Activated CD4-positive, alpha-beta memory T cell treated with anti-CD3 and anti-CD28 coated beads for 36 hours (primary cell): ENCODE measurements at regions of chr11 and their contacts with region 1.

Region 1: DNA sequence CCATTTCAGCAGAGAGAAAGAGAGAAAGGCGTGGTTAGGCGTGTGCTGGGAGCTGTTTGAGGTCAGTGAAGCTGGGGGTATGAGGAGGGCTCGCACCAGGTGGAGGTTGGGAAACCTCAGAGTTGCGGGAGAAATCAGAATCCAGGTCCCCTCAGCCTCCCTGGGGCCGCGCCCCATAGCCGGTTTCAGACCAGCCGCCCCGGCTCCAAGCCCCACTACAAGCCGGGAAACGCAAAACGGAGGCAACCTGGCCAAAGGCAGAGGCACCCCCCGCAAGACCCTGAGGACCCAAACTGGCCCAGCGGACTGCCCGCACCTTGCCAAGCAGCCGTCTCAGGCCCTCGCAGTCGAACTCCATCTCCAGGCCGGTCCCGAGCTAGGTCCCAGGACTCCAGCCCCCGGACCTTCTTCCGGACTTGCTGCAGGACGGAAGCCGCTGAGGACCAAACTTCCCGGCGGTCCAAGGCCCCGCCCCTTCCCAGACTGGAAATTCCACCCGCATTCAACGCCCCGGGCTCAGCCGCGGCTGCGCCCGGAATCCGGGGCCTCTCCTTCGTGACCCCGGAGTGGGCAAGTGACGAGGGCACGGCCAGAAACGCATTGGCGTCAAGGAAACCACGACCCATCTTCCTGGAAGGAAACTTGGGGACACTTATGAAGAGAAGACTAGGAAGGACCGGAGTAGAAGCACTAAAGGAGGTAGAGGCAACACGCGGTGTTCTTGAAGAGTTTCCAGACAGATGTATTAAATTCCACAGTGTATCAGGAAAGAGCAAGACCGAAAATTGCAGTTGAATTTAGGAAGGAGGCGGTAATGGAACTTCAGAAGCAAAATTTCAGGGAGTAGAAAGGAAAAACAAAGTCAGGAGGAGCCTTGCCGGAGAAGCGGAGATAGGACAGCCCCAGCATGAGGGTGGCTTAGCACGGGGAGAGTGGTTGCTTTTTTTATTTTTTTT is at the start of gene UEVLD:
- DNase-seq: peak; percentile 81
- H3K4me3 Mint-ChIP-seq: no peak within 1 kb of the TSS
- H3K27ac Mint-ChIP-seq: no peak within 1 kb of the TSS
- H3K4me1 Mint-ChIP-seq: peaks cover 10% of the 10 kb centered on the region
- H3K27me3 Mint-ChIP-seq: no peaks in the 10 kb centered on the region
- total RNA-seq, gene UEVLD: 20.9 to 26.2 TPM

Region 2: GRCh38 chr11:18540207-18541009 is 48.2 kb before region 1 on chr11:
- CTCF ChIA-PET with region 1: interaction called, 3 read pairs
- POLR2A ChIA-PET with region 1: no interaction called
- intact Hi-C with region 1: loop called (anchors 5 kb)
- DNase-seq: no peak
- H3K4me3 Mint-ChIP-seq: no peak overlapping the region
- H3K27ac Mint-ChIP-seq: no peak overlapping the region
- H3K4me1 Mint-ChIP-seq: peaks cover 5% of the 10 kb centered on the region
- H3K27me3 Mint-ChIP-seq: no peaks in the 10 kb centered on the region

Region 3: DNA sequence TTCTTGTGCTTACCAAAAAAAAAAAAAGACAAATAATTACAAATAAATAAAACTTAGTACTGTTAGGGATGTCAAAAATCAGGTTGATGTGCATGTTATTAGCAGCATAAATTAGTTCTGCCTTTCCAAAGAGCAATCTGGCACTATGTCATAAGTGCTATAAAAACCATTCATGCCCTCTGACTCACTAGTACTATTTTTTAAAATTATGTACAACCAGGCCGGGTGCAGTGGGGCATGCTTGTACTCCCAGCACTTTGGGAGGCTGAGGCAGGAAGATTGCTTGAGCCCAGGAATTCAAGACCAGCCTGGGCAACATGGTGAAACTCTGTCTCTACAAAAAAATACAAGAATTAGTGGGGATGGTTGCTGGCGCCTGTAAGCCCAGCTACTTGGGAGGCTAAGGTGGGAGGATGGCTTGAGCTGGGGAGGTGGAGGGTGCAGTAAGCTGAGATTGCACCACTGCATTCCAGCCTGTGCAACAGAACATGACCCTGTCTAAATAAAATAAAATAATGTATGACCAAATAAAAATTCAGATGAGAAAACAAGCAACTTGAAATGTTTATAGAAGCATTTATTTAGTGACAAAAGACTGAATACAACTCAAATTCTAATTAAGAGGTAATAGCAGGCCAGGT is 25.4 kb before region 1 on chr11:
- CTCF ChIA-PET with region 1: no interaction called
- POLR2A ChIA-PET with region 1: no interaction called
- intact Hi-C with region 1: no loop called
- DNase-seq: no peak
- H3K4me3 Mint-ChIP-seq: no peak overlapping the region
- H3K27ac Mint-ChIP-seq: no peak overlapping the region
- H3K4me1 Mint-ChIP-seq: no peaks in the 10 kb centered on the region
- H3K27me3 Mint-ChIP-seq: no peaks in the 10 kb centered on the region

Region 4: GRCh38 chr11:18599739-18600230 is 11.2 kb after region 1 on chr11 and contains the start of gene MISFA:
- CTCF ChIA-PET with region 1: no interaction called
- POLR2A ChIA-PET with region 1: no interaction called
- intact Hi-C with region 1: no loop called
- DNase-seq: no peak
- H3K4me3 Mint-ChIP-seq: no peak within 1 kb of the TSS
- H3K27ac Mint-ChIP-seq: no peak within 1 kb of the TSS
- H3K4me1 Mint-ChIP-seq: no peaks in the 10 kb centered on the region
- H3K27me3 Mint-ChIP-seq: no peaks in the 10 kb centered on the region
- total RNA-seq, gene MISFA: 2.2 to 2.9 TPM